Left ventricle myocardium superior (tissue), 1 donor: ENCODE measurements at regions of chr10 and their contacts with region 1.

Region 1: GRCh38 chr10:59687657-59688056 is 22.0 kb downstream of the SLC16A9 start:
- DNase-seq: no peak
- ATAC-seq: no peak

Region 2: DNA sequence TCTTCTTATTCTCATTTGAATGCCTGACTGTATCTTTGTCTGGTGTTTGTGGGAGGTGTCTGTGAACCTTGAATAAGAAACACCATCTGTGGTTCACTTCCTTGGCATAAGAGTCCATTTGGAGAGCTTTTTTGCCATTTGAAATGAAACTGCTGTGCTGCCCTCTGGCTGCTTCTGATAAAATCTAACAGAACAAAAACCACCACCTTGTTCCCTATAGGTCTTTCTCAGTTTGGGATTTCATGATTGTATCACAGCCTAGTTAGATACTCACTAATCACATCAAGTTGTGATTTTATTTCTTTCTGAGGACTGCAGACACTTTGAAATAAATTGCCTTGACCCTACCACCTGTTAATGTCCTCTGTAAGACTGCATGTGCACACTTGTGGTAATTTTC is 222.6 kb before region 1 on chr10:
- intact Hi-C with region 1: no loop called
- DNase-seq: no peak
- ATAC-seq: no peak

Region 3: GRCh38 chr10:59625721-59626522 is 61.7 kb before region 1 on chr10:
- intact Hi-C with region 1: no loop called
- DNase-seq: no peak
- ATAC-seq: peak; percentile 79

Region 4: DNA sequence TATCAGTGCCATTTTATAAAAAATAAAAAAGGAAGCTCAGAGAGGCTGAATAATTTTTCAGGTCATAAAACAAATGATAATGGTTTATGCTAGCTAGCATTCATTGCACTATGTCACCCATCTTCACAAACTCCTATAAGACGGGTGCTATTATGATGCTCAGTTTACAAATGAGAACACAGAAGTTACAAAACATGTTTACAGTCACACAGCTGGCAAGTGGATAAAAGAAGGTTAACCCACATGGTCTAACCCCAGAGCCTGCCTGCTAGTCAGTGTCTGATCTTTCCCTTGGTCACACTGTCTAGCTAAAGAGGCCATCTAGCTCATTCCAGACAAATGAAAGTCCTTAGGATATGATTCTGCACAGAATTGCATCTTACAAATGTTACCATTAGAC is 17.4 kb before region 1 on chr10:
- intact Hi-C with region 1: loop called (anchors 2 kb)
- DNase-seq: no peak
- ATAC-seq: no peak